Heart right ventricle (tissue), 16 donors: ENCODE measurements at regions of chr2 and their contacts with region 1.

Region 1: GRCh38 chr2:157596992-157597681 is 31.5 kb downstream of the ACVR1C start:
- DNase-seq: peak; percentile 4 to 29
- ATAC-seq: peak in 2 of 8 donors; percentile 34 to 58
- H3K4me3 ChIP-seq: peak overlapping the region in 6 of 10 donors; percentile 4 to 29 (median 13)
- H3K27ac ChIP-seq: no peak overlapping the region
- H3K4me1 ChIP-seq: peaks cover 0 to 2% (median 0%) of the 10 kb centered on the region in 9 donors
- H3K27me3 ChIP-seq: peaks cover 0 to 21% (median 16%) of the 10 kb centered on the region in 7 donors
- CTCF ChIP-seq: peak in 7 of 9 donors; percentile 37 to 58 (median 46)

Region 2: DNA sequence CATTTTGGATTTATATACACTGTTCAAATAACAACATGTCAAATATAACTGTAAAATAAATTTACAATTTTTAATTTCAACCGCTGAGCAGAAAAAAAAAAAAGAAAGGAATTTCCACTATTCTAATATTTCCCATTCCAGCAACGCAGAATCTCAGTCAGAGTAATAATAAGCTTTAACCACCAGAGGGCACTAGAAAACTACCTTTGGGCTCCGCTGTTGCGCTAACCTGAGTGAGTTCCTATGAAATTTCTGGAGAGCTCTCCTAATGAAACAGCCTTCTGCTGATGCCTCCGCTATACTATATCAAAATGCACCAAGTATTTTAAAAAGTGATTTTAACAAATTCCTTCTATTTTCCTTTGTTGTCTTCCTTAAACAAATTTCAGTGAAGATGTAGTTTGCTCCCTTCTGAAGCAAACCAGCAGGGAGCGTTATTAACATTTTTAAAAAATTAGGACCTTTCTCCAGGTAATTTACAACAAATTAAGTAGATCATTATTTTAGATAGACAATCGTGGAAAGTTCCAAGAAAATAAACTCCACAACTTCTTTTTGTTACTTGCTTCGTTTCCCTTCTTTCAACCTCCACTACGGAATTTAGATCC is 294.5 kb before region 1 on chr2:
- intact Hi-C with region 1: loop called in 5 of 10 experiments (anchors 5 to 10 kb)
- DNase-seq: peak in 1 of 2 donors; percentile 8
- ATAC-seq: peak in 4 of 8 donors; percentile 53 to 78 (median 62)
- H3K4me3 ChIP-seq: no peak overlapping the region
- H3K27ac ChIP-seq: no peak overlapping the region
- H3K4me1 ChIP-seq: peaks cover 0 to 4% (median 0%) of the 10 kb centered on the region in 9 donors
- H3K27me3 ChIP-seq: peaks cover 0 to 18% (median 9%) of the 10 kb centered on the region in 7 donors
- CTCF ChIP-seq: peak; percentile 56 to 85 (median 79)

Region 3: DNA sequence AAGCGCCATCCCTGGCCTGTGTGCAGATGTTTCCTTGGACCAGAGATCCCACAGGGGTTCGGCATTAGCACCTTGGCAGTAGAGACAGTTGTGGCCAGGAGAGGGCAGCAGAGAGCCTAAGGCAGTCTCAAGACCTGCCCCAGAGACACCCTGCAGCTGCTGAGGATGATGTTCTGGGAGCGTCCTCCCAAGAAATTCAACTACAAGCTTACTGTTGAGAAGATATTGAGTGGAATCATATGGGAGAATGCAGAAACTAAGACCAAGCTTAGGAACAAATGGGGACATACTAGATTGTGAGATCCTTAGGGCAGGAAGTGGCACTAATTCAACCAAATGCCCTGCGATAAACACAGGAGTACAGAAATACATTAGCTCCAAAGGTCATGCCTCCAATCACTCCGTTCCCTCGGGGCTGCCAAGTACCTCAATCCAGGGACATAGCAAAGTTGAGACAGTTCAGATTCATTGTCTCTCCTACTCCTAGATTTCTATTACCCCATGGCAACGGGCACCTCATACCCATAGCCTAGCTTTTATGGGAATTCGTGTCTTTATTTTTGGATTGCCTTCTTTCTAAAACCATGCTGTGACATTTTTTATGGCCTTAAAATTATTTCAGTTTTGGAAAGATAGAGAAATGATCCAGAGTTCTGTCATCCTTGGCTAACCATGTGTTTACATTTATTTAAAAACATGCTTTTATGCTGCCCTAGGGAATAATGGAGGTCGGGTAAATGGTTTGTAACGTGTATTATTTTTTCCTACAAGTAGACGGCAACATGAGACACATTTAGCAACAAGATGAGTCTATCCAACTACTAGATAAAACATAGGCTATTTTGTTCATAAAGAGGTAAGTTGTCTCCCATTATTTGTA is 269.3 kb before region 1 on chr2:
- intact Hi-C with region 1: loop called in 4 of 10 experiments (anchors 10 kb)
- DNase-seq: peak; percentile 79
- ATAC-seq: peak; percentile 61 to 96 (median 91)
- H3K4me3 ChIP-seq: no peak overlapping the region
- H3K27ac ChIP-seq: no peak overlapping the region
- H3K4me1 ChIP-seq: peaks cover 0 to 12% (median 7%) of the 10 kb centered on the region in 9 donors
- H3K27me3 ChIP-seq: no peaks in the 10 kb centered on the region
- CTCF ChIP-seq: peak; percentile 70 to 97 (median 88)

Region 4: GRCh38 chr2:157395811-157396210 is 201.3 kb before region 1 on chr2:
- intact Hi-C with region 1: no loop called
- DNase-seq: no peak
- ATAC-seq: no peak
- H3K4me3 ChIP-seq: no peak overlapping the region
- H3K27ac ChIP-seq: no peak overlapping the region
- H3K4me1 ChIP-seq: no peaks in the 10 kb centered on the region
- H3K27me3 ChIP-seq: no peaks in the 10 kb centered on the region
- CTCF ChIP-seq: no peak

Region 5: DNA sequence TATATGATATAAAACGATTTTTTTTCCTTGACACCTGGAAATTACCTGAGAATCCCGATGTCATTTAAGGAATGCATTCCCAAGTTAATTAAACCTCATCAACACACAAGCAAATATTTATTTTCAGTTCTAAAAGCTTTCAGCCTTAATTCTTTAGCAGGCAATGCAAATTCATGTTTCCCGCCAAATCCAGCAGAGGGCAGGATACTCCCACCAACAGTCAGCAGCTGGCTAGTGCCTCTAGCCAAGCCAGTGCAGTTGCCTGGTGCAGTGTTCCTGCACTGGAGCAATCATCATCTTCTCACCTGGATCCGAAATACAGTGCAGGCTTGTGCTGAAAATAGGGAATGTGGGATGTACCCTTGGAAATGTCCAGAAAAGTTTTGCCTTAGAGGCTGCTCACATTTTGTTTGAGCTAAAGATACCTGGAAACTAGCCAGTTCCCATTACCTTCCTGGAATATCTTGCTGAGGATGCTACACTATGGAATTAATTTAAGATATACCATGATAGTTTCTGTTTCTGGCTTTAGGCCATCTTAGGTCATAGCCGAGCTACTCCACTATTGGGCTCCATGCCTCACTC is 104.9 kb before region 1 on chr2:
- intact Hi-C with region 1: loop called in 4 of 10 experiments (anchors 5 to 10 kb)
- DNase-seq: peak; percentile 27 to 60
- ATAC-seq: peak in 7 of 8 donors; percentile 70 to 84 (median 74)
- H3K4me3 ChIP-seq: no peak overlapping the region
- H3K27ac ChIP-seq: no peak overlapping the region
- H3K4me1 ChIP-seq: no peaks in the 10 kb centered on the region
- H3K27me3 ChIP-seq: peaks cover 0 to 11% (median 0%) of the 10 kb centered on the region in 7 donors
- CTCF ChIP-seq: peak; percentile 45 to 78 (median 72)

Region 6: DNA sequence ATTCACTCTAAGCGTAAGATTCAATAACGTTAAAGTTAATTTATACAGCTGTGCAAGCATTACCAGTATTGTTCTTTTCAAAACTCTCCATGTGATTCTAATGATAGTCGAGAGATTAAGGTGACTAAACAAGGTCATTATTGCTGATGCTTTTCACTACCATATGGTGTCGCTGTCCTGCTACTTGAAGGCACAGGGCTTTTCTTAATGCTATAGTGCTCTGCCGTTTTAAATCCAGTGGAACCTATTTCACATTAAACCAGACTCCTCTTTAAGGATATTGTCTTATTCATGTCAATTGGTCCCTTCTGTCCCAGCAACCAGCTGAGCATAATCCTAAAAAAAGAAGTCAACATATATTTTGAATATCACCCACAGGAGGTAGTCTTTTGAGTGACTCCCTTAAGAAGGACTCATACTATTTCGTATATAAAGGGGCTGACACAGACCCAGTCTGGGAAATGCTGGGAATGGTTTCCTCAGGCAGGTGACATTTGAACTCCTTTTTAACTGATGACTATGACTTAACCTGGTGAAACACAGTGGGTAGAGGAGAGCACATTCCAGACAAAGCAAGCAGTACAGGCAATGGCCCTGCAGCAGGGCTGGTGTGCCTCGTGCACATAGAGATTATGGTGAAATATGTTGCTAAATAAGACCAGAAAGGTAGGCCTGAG is 99.4 kb before region 1 on chr2:
- intact Hi-C with region 1: loop called in 5 of 10 experiments (anchors 5 to 10 kb)
- DNase-seq: no peak
- ATAC-seq: peak in 3 of 8 donors; percentile 49 to 61 (median 56)
- H3K4me3 ChIP-seq: no peak overlapping the region
- H3K27ac ChIP-seq: no peak overlapping the region
- H3K4me1 ChIP-seq: no peaks in the 10 kb centered on the region
- H3K27me3 ChIP-seq: no peaks in the 10 kb centered on the region
- CTCF ChIP-seq: peak; percentile 21 to 69 (median 58)

Region 7: DNA sequence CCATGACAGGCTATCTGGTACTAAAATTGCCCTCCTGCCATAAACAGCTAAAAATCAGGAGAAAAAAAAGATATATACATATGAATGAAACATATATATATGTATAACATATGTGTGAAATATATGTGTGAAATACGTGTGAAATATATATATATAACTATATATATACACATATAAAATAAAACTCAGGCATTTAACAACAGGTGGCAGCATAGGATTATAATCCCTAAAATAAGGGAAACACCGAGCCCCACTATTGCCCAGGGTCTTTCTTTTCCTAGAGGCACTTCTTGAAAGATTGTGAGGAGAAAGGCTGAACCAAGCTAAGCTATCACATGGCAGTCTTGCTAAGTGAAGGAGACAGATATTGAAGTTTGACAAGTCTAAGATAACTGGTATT is 87.4 kb before region 1 on chr2:
- intact Hi-C with region 1: loop called in 1 of 10 experiments (anchors 10 kb)
- DNase-seq: no peak
- ATAC-seq: no peak
- H3K4me3 ChIP-seq: no peak overlapping the region
- H3K27ac ChIP-seq: no peak overlapping the region
- H3K4me1 ChIP-seq: no peaks in the 10 kb centered on the region
- H3K27me3 ChIP-seq: peaks cover 0 to 6% (median 2%) of the 10 kb centered on the region in 7 donors
- CTCF ChIP-seq: peak in 5 of 9 donors; percentile 6 to 17 (median 13)